ENCODE measurements at regions of chr13 and their contacts with region 1.

Region 1: DNA sequence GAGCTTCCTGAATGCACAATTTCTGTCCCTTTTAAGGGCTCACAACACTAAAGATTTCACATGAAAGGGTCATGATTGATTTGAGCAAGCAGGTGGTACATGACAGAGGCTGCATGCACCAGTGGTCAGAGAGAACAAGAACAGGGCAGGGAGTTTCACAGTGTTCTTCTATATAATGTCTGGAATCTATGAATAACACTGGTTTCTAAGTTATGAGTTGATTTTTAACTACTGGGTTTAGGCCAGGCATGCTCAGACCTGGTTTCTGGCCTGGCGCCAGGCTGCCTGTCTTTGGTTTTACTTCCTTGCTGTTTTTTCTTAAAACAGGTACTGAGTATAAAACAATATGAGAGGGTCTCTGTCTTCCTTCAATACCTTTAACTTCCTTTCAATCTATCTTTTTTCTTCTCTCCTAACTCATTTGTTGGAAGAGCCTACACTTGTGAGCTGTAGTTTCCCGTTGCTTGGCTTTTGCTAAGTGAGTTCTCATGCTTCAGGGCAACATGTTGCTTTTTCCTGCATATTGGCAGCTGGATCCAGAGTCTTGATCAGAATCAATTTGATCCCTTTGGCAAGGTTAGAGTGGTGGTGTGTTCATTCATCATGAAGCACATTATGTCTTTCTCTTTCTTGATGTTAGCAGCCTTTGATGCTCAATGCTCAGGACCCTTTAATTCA is 38.5 kb upstream of the FGF14 start:
- DNase-seq: peak; percentile 51
- H3K4me3 ChIP-seq: no peak overlapping the region
- H3K27ac ChIP-seq: peak overlapping the region; percentile 84
- H3K4me1 ChIP-seq: peaks cover 24% of the 10 kb centered on the region
- CTCF ChIP-seq: no peak

Region 2: GRCh38 chr13:102394158-102395053 is 46.0 kb before region 1 on chr13:
- CTCF ChIA-PET with region 1: interaction called, 4 read pairs
- POLR2A ChIA-PET with region 1: interaction called, 5 read pairs
- intact Hi-C with region 1: loop called (anchors 5 kb)
- DNase-seq: no peak
- H3K4me3 ChIP-seq: no peak overlapping the region
- H3K27ac ChIP-seq: no peak overlapping the region
- H3K4me1 ChIP-seq: no peaks in the 10 kb centered on the region
- CTCF ChIP-seq: no peak

Region 3: GRCh38 chr13:102596147-102597028 is 156.0 kb after region 1 on chr13 and contains the start of gene TPP2:
- CTCF ChIA-PET with region 1: no interaction called
- POLR2A ChIA-PET with region 1: interaction called, 3 read pairs
- intact Hi-C with region 1: loop called (anchors 5 kb)
- DNase-seq: peak; percentile 93
- H3K4me3 ChIP-seq: peak within 1 kb of the TSS; percentile 86
- H3K27ac ChIP-seq: peak within 1 kb of the TSS; percentile 91
- H3K4me1 ChIP-seq: peaks cover 24% of the 10 kb centered on the region
- CTCF ChIP-seq: no peak
- total RNA-seq, gene TPP2: 31.1 and 31.4 TPM in 2 replicates